ENCODE measurements at regions of chr5 and their contacts with region 1.

Region 1: DNA sequence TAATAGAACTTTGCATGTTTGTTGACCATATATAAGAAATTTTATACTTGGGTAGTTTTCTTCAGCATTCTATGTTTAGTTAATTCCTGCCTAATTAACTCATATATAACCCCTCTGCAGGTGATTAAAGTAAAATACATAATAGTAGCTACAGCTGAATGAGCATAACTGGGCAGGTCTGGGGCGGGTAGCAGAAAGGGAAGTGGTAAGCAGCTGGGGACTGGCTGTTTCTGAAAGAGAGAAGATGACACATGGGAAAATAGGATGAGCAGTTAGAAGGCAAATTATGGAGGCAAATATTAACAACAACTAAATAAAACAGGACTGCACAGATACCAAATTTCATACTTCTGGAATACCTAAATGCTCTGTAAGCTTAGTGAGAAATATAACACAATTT is 128.1 kb downstream of the CPLANE1 start:
- DNase-seq: no peak
- ATAC-seq: no peak

Region 2: DNA sequence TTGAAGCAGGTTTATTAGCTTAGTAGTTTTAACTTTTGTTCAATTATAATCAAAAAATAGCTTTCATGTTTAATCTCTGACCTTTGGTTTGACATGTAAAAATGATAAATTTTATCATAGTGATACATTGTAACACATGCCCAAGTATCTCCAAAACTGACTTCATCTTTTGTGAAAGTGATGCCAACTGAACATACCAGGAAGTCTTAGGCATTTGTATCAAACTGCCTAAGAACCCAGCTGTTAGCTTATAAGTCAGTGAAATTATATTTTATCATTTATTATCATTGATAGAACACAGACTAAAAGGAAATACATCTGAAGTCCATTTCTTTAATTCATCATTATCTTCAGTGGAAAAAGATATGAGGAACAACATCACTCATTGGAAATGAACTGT is 205.4 kb before region 1 on chr5:
- intact Hi-C with region 1: no loop called
- DNase-seq: no peak
- ATAC-seq: no peak

Region 3: GRCh38 chr5:37146896-37147295 is 25.9 kb after region 1 on chr5:
- intact Hi-C with region 1: loop called (anchors 2 kb)
- DNase-seq: no peak
- ATAC-seq: no peak